HEK293T (cell line): ENCODE measurements at regions of chr22 and their contacts with region 1.

Region 1: DNA sequence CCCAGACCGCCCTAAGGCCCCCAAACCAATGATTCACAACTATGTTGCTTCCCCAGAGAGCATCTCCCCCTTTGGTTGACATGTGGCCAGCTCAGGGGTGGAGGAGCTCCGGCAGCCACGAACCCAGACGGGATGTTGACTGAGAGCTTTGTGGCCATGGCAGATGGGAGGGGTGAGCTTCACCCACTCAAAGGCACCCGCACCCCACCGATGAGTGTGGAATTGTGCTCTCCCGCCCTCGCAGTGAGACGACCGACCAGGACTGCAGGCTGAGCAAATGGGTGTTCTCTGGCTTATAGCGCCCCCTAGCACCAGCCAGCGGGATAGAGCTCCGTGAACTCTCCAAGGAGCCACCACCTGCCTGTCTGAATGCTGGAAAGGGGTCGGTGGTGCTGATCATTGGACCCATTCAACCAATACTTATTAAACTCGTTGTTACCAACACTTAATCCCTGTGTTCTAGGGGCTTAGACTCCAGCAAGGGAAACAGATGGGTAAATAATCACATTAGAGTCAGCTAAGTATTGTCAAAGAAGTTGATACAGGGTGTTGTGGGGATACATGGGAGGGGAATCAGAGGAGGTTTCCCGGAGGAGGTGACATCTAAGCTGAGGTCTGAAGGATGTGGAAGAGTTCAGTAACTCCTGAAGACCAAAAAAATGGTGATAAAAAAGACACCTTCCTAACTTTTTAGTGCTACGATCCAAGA is 4.5 kb upstream of the TIMP3 start:
- DNase-seq: peak; percentile 84

Region 2: DNA sequence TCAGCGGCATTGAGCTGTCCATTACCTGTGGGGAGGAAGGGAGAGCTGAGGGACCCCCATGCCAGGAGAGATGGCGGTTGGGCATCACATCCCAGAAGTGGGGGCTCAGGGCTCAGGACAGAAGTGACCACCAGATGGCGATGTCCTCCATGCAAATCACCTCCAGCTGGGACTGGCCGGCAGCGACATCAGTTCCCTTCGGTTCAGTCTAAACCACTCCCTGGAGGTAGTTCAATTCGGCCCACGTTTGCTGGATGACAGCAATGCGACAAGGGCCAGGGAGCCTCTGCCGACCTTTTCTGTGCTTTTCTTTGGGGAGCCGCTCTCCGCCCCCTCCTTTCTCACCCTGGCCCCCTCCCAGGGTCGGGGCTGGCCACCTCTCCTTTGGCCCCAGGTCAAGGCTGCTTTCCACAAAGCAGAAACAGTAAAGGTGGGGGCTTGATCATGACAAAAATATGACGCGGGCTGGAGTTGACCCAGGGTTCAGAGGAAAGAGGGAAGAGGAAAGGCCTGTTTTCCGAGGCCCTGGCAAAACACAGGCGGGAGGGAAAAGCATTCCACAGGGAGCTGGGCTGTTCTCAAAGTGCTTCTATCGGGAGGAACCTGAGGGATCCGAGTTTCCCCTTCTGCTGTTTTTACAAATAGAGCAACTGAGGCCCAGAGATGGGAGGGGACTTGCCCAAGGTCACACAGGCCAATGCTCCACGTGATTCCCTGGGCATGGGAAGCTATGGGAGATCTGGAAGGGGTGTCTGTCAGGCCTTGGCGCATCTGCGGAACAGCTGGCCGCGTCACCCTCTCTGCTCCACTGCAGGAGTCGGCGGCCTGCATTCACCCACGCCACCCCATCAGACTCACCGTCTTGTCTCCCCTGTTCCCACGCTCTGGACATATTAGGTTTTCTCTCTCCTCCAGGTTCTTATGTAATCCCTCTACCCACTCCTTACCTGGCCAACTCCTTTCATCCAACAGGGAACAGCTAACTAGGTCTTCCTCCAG is 267.7 kb before region 1 on chr22:
- CTCF ChIA-PET with region 1: interaction called, 29 read pairs
- POLR2A ChIA-PET with region 1: interaction called, 5 read pairs
- DNase-seq: peak; percentile 92

Region 3: DNA sequence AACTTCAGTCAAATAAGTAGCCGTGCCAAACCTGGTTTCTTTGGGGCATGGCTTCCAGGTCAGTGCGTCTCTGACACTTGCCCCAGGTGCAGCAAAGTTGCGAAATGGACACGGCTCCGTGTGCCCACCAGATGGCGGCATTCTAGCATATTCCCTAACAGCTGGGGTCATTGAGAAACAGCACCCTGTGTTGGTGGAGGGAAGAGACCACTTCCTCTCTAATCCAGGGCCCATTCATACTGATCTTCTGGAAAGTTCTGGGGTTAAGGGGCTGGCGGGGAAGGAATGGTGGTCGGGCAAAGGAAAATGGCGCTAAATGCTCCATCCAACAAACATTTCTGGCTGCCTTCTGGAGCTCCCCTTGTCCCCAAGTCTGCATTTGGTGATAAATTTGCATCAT is 136.7 kb before region 1 on chr22:
- CTCF ChIA-PET with region 1: interaction called, 44 read pairs
- POLR2A ChIA-PET with region 1: no interaction called
- DNase-seq: peak; percentile 83

Region 4: DNA sequence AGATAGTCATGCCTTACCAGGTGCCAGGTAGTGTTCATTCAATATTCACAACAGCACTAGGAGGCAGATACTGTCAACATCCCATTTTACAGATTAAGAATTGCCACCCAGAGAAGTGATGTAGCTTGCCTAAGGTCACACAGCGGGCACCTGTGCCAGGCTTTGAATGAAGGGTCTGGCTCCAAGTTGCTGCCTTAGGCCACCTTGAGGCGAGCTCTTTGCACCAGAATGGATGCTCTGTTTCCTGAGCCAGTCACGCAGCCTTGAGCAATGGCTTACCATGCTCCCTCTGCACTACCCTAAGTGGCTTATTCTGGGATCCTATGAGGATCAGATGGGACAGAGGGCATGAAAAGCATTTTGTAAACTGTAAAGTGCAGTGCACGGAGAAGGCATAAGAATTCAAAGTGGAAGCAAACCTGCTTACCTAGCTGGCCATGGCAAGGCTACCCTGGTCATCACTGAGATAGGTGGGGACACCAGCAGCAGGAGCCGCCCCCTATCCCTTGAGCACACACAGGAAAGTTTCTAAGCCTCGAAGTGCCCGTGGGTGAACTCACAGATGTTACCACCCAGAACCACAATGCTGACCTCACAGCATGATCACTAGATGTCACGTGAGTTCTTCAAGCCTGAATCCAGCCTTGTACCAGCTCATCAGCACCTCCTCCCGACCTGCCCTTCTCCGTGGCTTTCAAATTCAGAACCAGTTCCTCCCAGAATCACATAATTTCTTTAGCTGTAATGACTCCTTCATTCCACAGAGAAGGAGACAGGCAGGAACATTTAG is 20.4 kb before region 1 on chr22:
- CTCF ChIA-PET with region 1: interaction called, 10 read pairs
- POLR2A ChIA-PET with region 1: no interaction called
- DNase-seq: no peak

Region 5: DNA sequence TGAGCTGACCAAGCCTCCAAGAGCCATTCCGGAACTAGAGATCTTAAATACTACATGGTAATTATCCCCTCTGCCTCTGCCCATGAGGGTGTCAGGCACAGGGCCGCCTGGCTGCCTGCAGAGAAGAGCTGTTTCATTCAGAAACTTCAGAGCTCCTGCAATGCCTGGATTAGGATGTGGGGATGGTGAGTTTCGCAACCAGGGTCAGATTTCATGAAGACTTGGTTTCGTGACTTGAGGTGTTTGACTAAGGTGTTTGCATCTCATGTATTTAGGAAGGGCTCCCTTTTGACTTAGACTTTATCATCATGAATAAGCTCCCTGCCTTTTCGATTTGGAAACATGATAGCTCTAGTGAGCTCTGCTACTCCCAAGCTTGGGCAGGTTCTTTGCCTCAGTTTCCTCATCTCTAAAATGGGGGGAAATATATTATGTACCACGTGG is 13.6 kb after region 1 on chr22:
- CTCF ChIA-PET with region 1: interaction called, 11 read pairs
- POLR2A ChIA-PET with region 1: interaction called, 19 read pairs
- DNase-seq: no peak

Region 6: GRCh38 chr22:32887324-32887980 is 90.4 kb after region 1 on chr22:
- CTCF ChIA-PET with region 1: no interaction called
- POLR2A ChIA-PET with region 1: no interaction called
- DNase-seq: no peak